HCT116 (cell line): ENCODE measurements at regions of chr9 and their contacts with region 1.

Region 1: GRCh38 chr9:116646661-116647512 is 40.2 kb upstream of the TRIM32 start:
- DNase-seq: peak; percentile 24
- ATAC-seq: peak; percentile 93
- H3K4me3 ChIP-seq: no peak overlapping the region
- H3K27ac ChIP-seq: no peak overlapping the region
- H3K4me1 ChIP-seq: no peaks in the 10 kb centered on the region
- H3K27me3 ChIP-seq: no peaks in the 10 kb centered on the region
- CTCF ChIP-seq: peak; percentile 55 to 66 (median 56); a peak in 5 of 6 replicates
- POLR2A ChIP-seq: no peak
- RAD21 ChIP-seq: peak; percentile 70

Region 2: GRCh38 chr9:115694014-115694413 is 952.9 kb before region 1 on chr9:
- CTCF ChIA-PET with region 1: interaction called, 4 read pairs
- POLR2A ChIA-PET with region 1: no interaction called
- RAD21 ChIA-PET with region 1: no interaction called
- intact Hi-C with region 1: loop called (anchors 5 kb)
- DNase-seq: no peak
- ATAC-seq: peak; percentile 63; the same call in 1 of the 2 replicates
- H3K4me3 ChIP-seq: no peak overlapping the region
- H3K27ac ChIP-seq: no peak overlapping the region
- H3K4me1 ChIP-seq: peaks cover 0 to 9% of the 10 kb centered on the region in 2 experiments; a peak in 1 of 4 replicates
- H3K27me3 ChIP-seq: peaks cover 23% of the 10 kb centered on the region; the same call in 1 of the 2 replicates
- CTCF ChIP-seq: peak in 2 of 3 experiments; percentile 25 to 43; a peak in 4 of 6 replicates
- POLR2A ChIP-seq: no peak
- RAD21 ChIP-seq: peak; percentile 68

Region 3: GRCh38 chr9:116488373-116488772 is 158.5 kb before region 1 on chr9:
- CTCF ChIA-PET with region 1: no interaction called
- POLR2A ChIA-PET with region 1: no interaction called
- RAD21 ChIA-PET with region 1: no interaction called
- intact Hi-C with region 1: no loop called
- DNase-seq: no peak
- ATAC-seq: no peak
- H3K4me3 ChIP-seq: no peak overlapping the region
- H3K27ac ChIP-seq: no peak overlapping the region
- H3K4me1 ChIP-seq: peaks cover 3 to 9% of the 10 kb centered on the region in 2 experiments; a peak in 3 of 4 replicates
- H3K27me3 ChIP-seq: no peaks in the 10 kb centered on the region
- CTCF ChIP-seq: no peak
- POLR2A ChIP-seq: no peak
- RAD21 ChIP-seq: no peak

Region 4: GRCh38 chr9:116589392-116590354 is 57.2 kb before region 1 on chr9:
- CTCF ChIA-PET with region 1: interaction called, 3 read pairs
- POLR2A ChIA-PET with region 1: no interaction called
- RAD21 ChIA-PET with region 1: no interaction called
- intact Hi-C with region 1: loop called (anchors 2 kb)
- DNase-seq: peak; percentile 72
- ATAC-seq: peak; percentile 99
- H3K4me3 ChIP-seq: no peak overlapping the region
- H3K27ac ChIP-seq: no peak overlapping the region
- H3K4me1 ChIP-seq: peaks cover 0 to 4% of the 10 kb centered on the region in 2 experiments; a peak in 1 of 4 replicates
- H3K27me3 ChIP-seq: no peaks in the 10 kb centered on the region
- CTCF ChIP-seq: peak; percentile 80 to 97 (median 95)
- POLR2A ChIP-seq: no peak
- RAD21 ChIP-seq: peak; percentile 71

Region 5: DNA sequence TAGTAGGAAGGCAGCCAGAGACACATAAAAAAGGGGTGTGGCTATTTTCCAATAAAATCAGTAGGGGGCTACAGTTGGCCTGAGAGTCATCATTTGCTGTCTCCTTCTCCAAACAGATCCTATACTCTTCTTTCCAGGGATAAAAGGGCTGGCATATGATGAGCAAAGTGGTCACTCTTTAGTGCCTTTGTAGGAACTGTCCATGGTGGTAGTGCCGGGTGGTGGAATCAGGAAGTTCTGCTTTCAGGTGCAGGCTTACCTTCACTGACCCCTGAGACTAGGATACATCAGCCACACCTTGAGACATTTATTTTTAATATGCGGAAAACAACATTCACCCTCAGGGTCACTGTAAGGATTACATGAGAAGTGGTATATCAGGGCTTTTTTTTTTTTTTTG is 687.2 kb after region 1 on chr9:
- CTCF ChIA-PET with region 1: no interaction called
- POLR2A ChIA-PET with region 1: no interaction called
- RAD21 ChIA-PET with region 1: no interaction called
- intact Hi-C with region 1: no loop called
- DNase-seq: no peak
- ATAC-seq: no peak
- H3K4me3 ChIP-seq: no peak overlapping the region
- H3K27ac ChIP-seq: no peak overlapping the region
- H3K4me1 ChIP-seq: no peaks in the 10 kb centered on the region
- H3K27me3 ChIP-seq: no peaks in the 10 kb centered on the region
- CTCF ChIP-seq: no peak
- POLR2A ChIP-seq: no peak
- RAD21 ChIP-seq: no peak